A673 (cell line): ENCODE measurements at regions of chr17 and their contacts with region 1.

Region 1: DNA sequence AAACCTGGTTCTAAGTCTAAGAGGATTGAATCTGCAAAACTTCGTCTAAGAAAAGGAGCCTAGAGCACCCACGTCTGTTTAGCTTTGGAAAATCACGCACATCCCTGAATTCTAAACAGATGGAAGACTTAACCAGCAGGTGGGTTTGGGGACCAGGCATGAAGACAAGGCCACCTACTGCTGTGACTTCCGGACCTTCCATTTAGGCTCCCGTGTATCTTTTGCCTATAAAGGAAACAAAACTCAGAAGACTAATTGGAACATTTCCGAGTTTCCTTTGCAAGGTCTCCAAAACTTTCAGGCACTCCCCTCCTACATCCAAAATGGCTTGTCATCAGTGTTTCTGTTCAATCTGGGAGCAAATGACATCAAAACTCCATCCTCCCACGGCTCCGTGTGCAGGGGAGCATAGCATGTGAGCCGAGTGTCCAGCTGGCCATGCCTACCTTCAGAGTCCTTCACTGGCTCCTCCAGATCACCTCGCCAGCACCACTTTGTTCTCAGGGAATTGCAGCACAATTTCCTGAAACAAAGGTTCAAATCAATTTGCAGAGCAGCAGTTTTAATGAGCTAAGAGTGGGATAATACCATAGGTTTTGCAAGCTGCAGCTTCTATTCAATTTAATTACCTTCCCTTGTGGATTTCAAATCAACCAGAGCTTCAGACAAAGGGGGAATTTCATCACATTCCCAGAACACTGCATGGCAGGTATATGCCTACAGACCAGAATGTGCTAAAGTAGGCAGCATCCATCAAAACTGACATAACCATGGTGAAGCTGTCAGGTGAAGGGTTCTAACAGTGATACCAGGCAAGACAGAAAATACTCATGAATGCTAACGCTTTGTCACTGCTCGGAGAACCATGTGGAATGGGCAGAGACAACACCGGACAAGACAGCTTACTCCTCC is 23.5 kb downstream of the CACNG1 start:
- DNase-seq: peak; percentile 92
- H3K4me3 ChIP-seq: no peak overlapping the region
- H3K27ac ChIP-seq: peak overlapping the region; percentile 10
- H3K4me1 ChIP-seq: peaks cover 26% of the 10 kb centered on the region
- H3K27me3 ChIP-seq: no peaks in the 10 kb centered on the region
- CTCF ChIP-seq: 0 out of 2 replicates have a peak, but pooled peaks have one; percentile 15

Region 2: GRCh38 chr17:67365738-67366192 is 297.9 kb after region 1 on chr17:
- CTCF ChIA-PET with region 1: no interaction called
- POLR2A ChIA-PET with region 1: interaction called, 12 read pairs
- intact Hi-C with region 1: no loop called
- DNase-seq: no peak
- H3K4me3 ChIP-seq: peak overlapping the region; percentile 93
- H3K27ac ChIP-seq: peak overlapping the region; percentile 97
- H3K4me1 ChIP-seq: peaks cover 30% of the 10 kb centered on the region
- H3K27me3 ChIP-seq: no peaks in the 10 kb centered on the region
- CTCF ChIP-seq: no peak